Caco-2 (cell line): ENCODE measurements at regions of chr15 and their contacts with region 1.

Region 1: DNA sequence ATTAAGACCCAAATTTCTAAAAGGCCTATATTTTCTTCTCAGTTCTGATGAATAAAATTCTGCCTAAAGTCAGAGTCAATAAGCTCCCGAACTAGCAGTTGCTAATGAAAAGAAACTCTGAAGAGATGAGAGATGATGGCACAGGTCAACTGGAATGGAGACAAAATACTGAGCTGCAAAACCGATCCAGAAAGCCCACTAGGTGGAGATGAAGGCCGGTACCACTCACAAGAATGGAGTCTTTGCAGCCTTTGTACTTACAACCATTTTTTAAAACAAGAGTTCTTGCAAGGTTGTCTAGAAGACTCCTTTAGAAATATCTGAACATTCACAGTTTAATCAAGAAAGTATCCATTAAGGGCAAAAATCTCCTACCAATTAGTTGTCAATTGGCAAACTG is 119.9 kb upstream of the TJP1 start:
- DNase-seq: peak in 1 of 2 experiments; percentile 44
- H3K4me3 ChIP-seq: no peak overlapping the region
- H3K4me3 Mint-ChIP-seq: no peak overlapping the region
- H3K27ac Mint-ChIP-seq: no peak overlapping the region
- H3K4me1 ChIP-seq: peaks cover 9% of the 10 kb centered on the region; the same call in 1 of the 2 replicates
- H3K4me1 Mint-ChIP-seq: no peaks in the 10 kb centered on the region
- H3K27me3 ChIP-seq: no peaks in the 10 kb centered on the region
- H3K27me3 Mint-ChIP-seq: no peaks in the 10 kb centered on the region
- CTCF ChIP-seq: peak; percentile 39 to 64

Region 2: DNA sequence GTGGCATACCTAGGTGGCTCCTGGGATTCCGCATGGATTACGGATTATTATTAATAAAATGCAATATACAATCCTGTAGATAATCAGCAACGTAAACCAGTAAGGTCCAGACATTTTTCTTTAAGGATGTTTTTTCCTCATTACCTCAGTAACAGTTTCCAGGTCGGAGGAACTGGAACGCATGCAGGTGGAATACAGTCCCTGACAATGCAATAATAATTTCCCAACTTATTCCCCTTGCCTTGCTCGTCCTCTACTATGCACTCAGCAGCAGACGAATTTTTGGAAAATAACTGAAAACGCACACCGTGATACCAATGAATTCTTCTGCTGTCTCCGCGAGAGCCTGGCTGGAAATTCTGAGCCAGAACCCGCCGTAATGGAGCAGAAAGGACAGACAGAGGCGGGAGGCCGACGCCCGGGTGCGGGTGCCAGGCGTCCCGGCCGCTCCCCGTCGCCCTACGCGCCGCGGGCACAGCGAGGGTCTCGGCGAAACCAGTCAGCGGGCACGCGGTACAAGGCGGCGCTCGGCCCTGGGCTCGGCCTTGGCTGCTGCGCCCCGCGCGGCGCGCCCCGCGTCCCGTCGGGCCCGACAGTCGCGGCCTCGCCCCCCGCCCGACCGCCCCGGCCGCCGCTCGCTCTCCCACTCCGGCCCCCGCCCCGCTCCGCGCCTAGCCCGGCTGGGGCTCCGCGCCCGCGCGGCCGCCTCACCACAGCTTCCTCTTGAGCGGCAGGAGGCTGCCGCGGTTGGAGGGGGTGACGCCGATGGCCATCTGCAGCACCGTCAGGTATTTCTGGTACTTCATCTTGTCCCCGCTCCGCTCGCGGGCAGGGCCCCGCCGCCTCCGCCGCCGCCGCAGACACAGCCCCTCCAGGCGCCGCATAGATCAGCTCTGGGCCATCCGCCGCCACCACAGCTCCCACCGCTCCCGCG is 26.1 kb after region 1 on chr15:
- CTCF ChIA-PET with region 1: no interaction called
- POLR2A ChIA-PET with region 1: no interaction called
- intact Hi-C with region 1: no loop called
- DNase-seq: peak in 1 of 2 experiments; percentile 44
- H3K4me3 ChIP-seq: peak overlapping the region; percentile 30
- H3K4me3 Mint-ChIP-seq: peak overlapping the region; percentile 79
- H3K27ac Mint-ChIP-seq: no peak overlapping the region
- H3K4me1 ChIP-seq: no peaks in the 10 kb centered on the region
- H3K4me1 Mint-ChIP-seq: no peaks in the 10 kb centered on the region
- H3K27me3 ChIP-seq: 0 out of 2 replicates have a peak, but pooled peaks cover 1% of the 10 kb centered on the region
- H3K27me3 Mint-ChIP-seq: peaks cover 34% of the 10 kb centered on the region
- CTCF ChIP-seq: no peak

Region 3: GRCh38 chr15:30008156-30008555 is 66.0 kb after region 1 on chr15:
- CTCF ChIA-PET with region 1: no interaction called
- POLR2A ChIA-PET with region 1: no interaction called
- intact Hi-C with region 1: no loop called
- DNase-seq: no peak
- H3K4me3 ChIP-seq: no peak overlapping the region
- H3K4me3 Mint-ChIP-seq: no peak overlapping the region
- H3K27ac Mint-ChIP-seq: no peak overlapping the region
- H3K4me1 ChIP-seq: no peaks in the 10 kb centered on the region
- H3K4me1 Mint-ChIP-seq: no peaks in the 10 kb centered on the region
- H3K27me3 ChIP-seq: no peaks in the 10 kb centered on the region
- H3K27me3 Mint-ChIP-seq: peaks cover 12% of the 10 kb centered on the region
- CTCF ChIP-seq: no peak

Region 4: DNA sequence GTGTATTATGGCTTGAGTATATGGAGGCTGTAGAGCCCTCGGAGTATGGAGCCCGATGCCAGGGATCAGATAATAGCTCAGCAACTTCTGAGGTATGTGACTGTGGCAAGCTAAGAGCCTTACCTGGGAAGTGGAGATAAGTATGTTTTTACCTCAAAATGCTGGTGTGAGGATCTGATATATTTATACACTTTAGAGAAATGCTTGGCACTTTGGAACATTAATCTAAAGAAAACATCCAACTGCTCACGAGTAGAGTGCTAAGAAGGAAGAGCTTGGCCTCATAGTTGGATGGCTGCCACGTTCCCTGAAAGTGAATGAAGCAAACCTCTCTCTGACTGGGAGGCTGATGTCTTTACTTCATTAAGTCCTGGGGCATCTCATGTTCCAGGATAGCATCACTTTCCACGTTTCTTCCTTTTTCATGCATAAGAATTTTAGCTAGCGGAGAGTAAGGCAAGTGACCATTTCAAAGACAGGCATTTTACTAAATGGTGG is 81.7 kb after region 1 on chr15:
- CTCF ChIA-PET with region 1: no interaction called
- POLR2A ChIA-PET with region 1: no interaction called
- intact Hi-C with region 1: loop called (anchors 5 kb)
- DNase-seq: no peak
- H3K4me3 ChIP-seq: no peak overlapping the region
- H3K4me3 Mint-ChIP-seq: no peak overlapping the region
- H3K27ac Mint-ChIP-seq: no peak overlapping the region
- H3K4me1 ChIP-seq: no peaks in the 10 kb centered on the region
- H3K4me1 Mint-ChIP-seq: no peaks in the 10 kb centered on the region
- H3K27me3 ChIP-seq: no peaks in the 10 kb centered on the region
- H3K27me3 Mint-ChIP-seq: peaks cover 27% of the 10 kb centered on the region
- CTCF ChIP-seq: no peak

Region 5: DNA sequence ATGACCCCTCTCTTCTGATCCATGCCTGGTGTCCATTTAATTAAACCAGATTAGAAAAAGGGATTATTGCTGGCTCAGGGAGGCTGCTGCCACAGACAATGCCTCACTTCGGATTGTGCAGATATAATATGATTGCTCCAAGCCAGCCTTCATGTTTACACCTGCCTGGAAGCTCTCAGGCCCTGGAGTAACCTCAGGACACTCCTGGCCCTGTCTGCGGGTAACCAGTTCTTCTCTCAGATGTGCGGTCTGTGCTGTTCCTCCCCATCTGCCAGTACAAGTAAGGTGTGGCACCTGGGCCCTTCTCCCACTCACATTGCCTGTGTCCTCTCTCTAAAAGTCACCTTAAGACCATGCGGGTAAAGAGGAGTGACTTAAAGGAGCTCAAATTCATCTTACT is 131.8 kb after region 1 on chr15:
- CTCF ChIA-PET with region 1: interaction called, 18 read pairs
- POLR2A ChIA-PET with region 1: no interaction called
- intact Hi-C with region 1: no loop called
- DNase-seq: no peak
- H3K4me3 ChIP-seq: no peak overlapping the region
- H3K4me3 Mint-ChIP-seq: no peak overlapping the region
- H3K27ac Mint-ChIP-seq: no peak overlapping the region
- H3K4me1 ChIP-seq: no peaks in the 10 kb centered on the region
- H3K4me1 Mint-ChIP-seq: peaks cover 7% of the 10 kb centered on the region
- H3K27me3 ChIP-seq: no peaks in the 10 kb centered on the region
- H3K27me3 Mint-ChIP-seq: peaks cover 19% of the 10 kb centered on the region
- CTCF ChIP-seq: no peak